ENCODE measurements at regions of chr3 and their contacts with region 1.

Region 1: DNA sequence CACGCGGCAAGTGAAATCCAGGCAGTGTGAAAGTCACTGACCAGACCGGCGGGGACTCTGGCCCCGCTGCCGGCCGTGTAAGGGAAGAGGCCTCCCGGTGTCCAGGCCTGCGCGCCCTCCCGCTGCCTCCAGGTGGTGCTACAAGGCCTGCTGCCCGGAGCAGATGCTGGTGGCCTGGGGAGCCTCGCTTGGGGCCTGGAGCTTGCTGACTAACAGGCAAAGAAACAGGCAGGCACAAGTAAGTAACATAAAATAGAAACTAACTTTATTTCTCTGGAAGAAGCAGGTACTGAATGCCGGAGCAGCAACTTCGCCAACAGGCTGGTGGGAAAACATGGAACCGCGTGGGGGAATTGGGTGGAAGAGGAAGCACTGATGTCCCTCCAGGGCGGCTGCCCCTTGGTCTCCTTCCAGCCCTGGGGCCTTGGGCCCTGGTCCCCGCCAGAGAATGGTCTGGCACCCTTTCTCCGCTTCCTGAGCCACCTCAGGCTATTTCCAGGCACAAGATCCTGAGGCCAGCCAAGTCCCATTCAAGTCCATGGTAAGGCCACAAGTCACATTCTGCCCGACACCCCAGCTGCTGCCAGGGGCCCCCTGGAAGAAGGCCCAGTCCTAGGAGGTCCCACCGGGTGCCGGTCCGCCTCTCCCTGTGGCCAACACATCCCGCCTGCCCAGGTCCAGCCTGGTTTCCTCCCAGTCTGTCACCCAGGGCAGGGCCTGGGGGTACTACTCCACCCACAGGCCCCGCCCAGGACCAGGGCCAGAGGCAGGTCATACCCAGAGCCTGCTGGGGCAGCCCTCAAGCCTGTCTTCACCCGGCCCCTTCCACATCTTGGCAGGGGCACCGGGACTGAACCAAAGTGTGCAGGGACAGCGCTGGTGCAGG is 45.0 kb downstream of the TNK2 start:
- DNase-seq: peak; percentile 85
- ATAC-seq: peak; percentile 87
- H3K4me3 Mint-ChIP-seq: no peak overlapping the region
- H3K27ac Mint-ChIP-seq: no peak overlapping the region
- H3K4me1 Mint-ChIP-seq: peaks cover 12% of the 10 kb centered on the region
- H3K27me3 Mint-ChIP-seq: no peaks in the 10 kb centered on the region
- CTCF ChIP-seq: peak; percentile 89

Region 2: DNA sequence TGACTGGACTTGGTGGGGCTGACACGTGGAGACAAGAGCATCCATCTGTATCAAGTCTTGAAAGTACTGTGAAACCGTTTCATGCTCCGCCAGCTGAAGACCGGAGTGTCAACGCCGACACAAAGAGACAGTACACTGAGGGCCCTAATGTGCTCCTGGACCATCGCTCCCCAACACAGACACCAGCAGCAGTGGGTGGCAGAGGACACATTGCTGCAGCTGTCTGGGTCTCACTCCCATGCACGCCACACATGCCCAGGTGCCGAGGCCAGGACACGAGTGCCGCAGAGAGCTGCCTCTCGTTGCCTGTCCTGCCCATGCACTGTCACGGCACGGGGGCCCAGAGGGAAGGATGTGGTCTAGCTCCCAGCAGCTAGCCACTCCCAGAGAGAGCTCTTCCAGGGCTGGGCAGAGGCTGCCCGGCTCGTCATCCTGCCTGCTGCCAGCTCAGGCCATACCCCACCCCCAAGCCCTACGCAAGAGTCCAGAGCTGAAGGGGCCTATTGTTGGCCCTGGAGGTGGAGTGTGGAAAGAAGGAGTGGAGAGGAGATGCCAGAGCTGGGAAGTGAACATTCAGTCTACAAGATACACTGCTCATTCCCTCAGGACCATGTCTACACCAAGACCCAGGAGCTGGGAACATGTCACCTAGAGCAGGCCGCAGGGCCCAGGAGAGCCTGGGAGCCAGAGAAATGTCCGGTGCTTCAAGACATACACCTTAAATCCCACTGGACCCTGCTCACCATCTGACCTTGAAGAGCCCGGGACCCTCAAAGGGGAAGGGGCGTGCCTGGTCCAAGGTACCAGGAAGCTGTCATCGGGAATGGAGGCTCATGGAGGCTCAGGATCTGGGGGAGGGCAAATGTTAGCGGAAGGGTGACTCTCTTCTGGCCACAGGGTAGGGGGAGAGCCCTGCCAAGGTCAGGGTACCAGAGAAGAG is 37.3 kb after region 1 on chr3:
- CTCF ChIA-PET with region 1: interaction called, 131 read pairs
- POLR2A ChIA-PET with region 1: no interaction called
- intact Hi-C with region 1: loop called (anchors 2 kb)
- DNase-seq: peak; percentile 66
- ATAC-seq: peak; percentile 45
- H3K4me3 Mint-ChIP-seq: no peak overlapping the region
- H3K27ac Mint-ChIP-seq: peak overlapping the region; percentile 42
- H3K4me1 Mint-ChIP-seq: peaks cover 74% of the 10 kb centered on the region
- H3K27me3 Mint-ChIP-seq: no peaks in the 10 kb centered on the region
- CTCF ChIP-seq: no peak